Activated CD4-positive, alpha-beta T cell treated with anti-CD3 and anti-CD28 coated beads, Interleukin-2, amount 10 ng/mL, durations not matched to agents 24 days and 14 days (primary cell): ENCODE measurements at regions of chr21 and their contacts with region 1.

Region 1: DNA sequence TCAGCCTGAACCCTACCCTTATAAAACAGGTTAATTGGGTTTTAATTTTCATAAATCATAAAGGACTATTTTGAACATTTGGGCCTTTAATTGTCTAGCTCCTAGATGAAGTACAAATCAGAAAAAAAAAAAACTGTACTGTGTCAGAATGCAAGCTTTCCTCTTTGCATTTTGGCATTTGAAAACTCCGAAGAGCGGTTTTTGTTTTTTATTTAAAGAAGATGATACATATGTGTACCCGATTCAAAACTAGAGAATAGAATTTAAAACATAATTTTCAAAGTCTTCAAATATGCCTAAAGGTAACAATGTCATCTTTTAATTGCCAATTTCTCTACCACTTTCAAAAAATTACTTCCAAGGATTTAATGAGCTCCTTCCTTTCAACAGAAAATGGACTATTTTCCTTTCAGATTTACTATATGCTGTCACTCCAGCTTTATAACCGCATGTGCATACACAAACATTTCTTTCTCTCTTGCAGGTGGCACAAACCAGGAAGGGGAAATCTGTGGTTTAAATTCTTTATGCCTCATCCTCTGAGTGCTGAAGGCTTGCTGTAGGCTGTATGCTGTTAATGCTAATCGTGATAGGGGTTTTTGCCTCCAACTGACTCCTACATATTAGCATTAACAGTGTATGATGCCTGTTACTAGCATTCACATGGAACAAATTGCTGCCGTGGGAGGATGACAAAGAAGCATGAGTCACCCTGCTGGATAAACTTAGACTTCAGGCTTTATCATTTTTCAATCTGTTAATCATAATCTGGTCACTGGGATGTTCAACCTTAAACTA is 33.7 kb downstream of the MRPL39 start:
- DNase-seq: peak; percentile 82
- H3K4me3 Mint-ChIP-seq: peak overlapping the region; percentile 82
- H3K27ac Mint-ChIP-seq: peak overlapping the region; percentile 96
- H3K4me1 Mint-ChIP-seq: peaks cover 69% of the 10 kb centered on the region
- H3K27me3 Mint-ChIP-seq: no peaks in the 10 kb centered on the region

Region 2: GRCh38 chr21:25421327-25422028 is 152.1 kb before region 1 on chr21:
- intact Hi-C with region 1: loop called (anchors 1 kb)
- DNase-seq: peak; percentile 89
- H3K4me3 Mint-ChIP-seq: peak overlapping the region; percentile 70
- H3K27ac Mint-ChIP-seq: peak overlapping the region; percentile 93
- H3K4me1 Mint-ChIP-seq: peaks cover 39% of the 10 kb centered on the region
- H3K27me3 Mint-ChIP-seq: no peaks in the 10 kb centered on the region

Region 3: DNA sequence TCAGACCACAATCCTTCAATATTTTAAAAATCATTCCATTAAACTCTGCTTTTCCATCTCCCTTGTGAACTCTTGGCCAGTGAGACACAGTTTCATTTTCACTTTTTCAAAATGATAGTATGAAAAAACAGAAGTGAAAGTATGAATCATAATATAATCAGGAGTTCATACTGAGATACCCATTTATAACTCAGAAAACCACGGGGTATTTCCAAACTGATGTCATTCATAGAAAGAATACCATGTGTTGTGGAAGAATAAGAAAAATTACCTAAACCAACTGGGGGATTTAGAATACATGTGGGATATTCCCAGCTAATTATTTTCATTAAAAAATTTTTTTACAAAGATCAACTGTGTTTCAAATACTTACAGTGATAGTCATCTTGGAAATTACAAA is 116.2 kb before region 1 on chr21:
- intact Hi-C with region 1: loop called (anchors 1 kb)
- DNase-seq: peak; percentile 67
- H3K4me3 Mint-ChIP-seq: peak overlapping the region; percentile 60
- H3K27ac Mint-ChIP-seq: peak overlapping the region; percentile 79
- H3K4me1 Mint-ChIP-seq: peaks cover 50% of the 10 kb centered on the region
- H3K27me3 Mint-ChIP-seq: no peaks in the 10 kb centered on the region

Region 4: GRCh38 chr21:25487046-25487594 is 86.5 kb before region 1 on chr21:
- intact Hi-C with region 1: loop called (anchors 1 kb)
- DNase-seq: peak; percentile 49
- H3K4me3 Mint-ChIP-seq: peak overlapping the region; percentile 63
- H3K27ac Mint-ChIP-seq: peak overlapping the region; percentile 91
- H3K4me1 Mint-ChIP-seq: peaks cover 52% of the 10 kb centered on the region
- H3K27me3 Mint-ChIP-seq: no peaks in the 10 kb centered on the region

Region 5: DNA sequence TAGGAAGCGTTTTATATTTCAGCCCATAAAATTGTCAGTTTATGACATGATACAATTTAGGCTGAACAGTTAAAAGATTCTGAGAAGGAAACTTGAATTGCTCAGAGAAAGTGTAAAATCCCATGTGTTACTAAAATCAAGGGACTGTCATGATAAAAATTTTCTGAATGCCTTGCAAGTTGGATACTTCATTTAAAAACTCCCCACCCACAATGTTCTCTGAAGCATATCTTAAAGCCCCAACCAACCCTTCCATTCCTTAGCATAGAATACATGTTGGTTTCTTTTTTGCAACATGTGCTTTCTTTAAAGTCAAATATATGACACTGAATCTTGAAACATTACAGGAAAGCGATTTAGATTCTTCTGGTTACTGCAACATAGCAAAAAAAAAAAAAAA is 63.7 kb before region 1 on chr21:
- intact Hi-C with region 1: loop called (anchors 1 kb)
- DNase-seq: no peak
- H3K4me3 Mint-ChIP-seq: peak overlapping the region; percentile 39
- H3K27ac Mint-ChIP-seq: peak overlapping the region; percentile 81
- H3K4me1 Mint-ChIP-seq: peaks cover 46% of the 10 kb centered on the region
- H3K27me3 Mint-ChIP-seq: no peaks in the 10 kb centered on the region

Region 6: DNA sequence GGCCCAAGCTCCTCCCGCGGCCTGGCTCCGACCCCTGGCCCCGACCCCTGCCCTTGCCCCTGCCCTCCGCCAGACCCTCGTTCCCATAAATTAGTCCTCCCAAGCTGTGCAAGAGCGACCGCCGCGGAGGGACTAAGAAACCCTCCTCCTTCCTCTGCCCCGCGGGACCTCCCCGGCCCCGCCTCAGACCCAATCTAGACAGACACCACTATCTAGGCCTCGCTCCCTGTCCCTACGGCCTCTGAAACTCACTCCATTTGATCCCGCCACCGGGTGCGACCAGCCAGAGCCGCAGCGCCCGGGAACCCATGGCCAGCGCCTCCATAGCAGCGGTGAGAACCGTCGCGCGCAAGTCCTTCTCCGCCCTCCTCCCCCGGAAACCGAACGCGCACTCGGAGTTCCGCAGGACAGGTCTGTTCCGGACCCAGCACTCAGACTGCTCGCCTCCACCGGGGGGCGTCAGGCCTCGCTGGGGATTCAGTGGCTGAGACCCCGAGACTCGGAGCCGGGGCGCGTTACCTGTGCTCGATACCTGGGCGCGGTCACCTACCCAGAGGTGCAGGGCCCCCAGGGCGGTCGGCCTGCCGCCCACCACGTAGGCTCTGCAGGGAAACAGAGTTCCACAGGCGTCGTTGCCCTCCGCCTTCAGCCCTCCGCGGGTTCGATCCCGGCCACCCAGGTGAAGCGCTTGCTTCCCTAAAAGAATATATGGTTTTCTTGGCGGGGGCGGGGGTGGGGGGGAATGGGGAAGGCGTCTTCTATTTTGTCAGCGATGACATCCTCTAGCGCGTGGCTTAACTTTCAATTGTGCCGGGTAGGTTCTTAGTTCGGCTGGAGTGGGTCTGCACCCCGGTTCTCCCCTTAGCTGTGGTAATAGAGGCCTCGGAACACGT is 33.8 kb after region 1 on chr21 and contains the start of gene MRPL39:
- intact Hi-C with region 1: loop called (anchors 1 kb)
- DNase-seq: peak; percentile 96
- H3K4me3 Mint-ChIP-seq: peak within 1 kb of the TSS; percentile 92
- H3K27ac Mint-ChIP-seq: peak within 1 kb of the TSS; percentile 97
- H3K4me1 Mint-ChIP-seq: peaks cover 25% of the 10 kb centered on the region
- H3K27me3 Mint-ChIP-seq: no peaks in the 10 kb centered on the region
- total RNA-seq, gene MRPL39: 63.2 and 66.0 TPM in 2 replicates

Region 7: DNA sequence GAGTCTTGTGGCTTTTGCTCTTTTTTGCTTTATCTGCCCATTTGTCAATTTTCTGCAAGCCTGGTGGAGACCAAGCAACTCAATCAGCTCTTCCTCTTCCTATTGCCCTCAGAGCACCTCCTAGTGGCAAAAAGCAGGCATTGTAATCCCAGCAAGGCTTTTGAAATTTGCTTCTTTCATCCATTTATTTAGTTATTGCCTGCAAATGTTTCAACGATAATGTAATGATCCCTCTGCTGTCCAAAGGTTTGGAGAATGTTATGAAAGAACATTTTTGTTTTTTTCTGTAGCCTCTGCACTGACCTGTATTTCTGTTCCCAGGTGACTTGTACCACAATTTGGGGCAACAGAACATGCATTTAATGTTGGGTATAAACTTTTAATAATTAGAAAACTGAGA is 289.0 kb after region 1 on chr21:
- intact Hi-C with region 1: no loop called
- DNase-seq: peak; percentile 69
- H3K4me3 Mint-ChIP-seq: no peak overlapping the region
- H3K27ac Mint-ChIP-seq: no peak overlapping the region
- H3K4me1 Mint-ChIP-seq: peaks cover 2% of the 10 kb centered on the region
- H3K27me3 Mint-ChIP-seq: peaks cover 18% of the 10 kb centered on the region